ENCODE measurements at regions of chr6 and their contacts with region 1.

Region 1: GRCh38 chr6:125956506-125957390 is at the start of gene HINT3:
- DNase-seq: peak; percentile 99
- ATAC-seq: peak; percentile 96 to 98
- total RNA-seq, gene HINT3: 22.1 to 27.5 TPM

Region 2: DNA sequence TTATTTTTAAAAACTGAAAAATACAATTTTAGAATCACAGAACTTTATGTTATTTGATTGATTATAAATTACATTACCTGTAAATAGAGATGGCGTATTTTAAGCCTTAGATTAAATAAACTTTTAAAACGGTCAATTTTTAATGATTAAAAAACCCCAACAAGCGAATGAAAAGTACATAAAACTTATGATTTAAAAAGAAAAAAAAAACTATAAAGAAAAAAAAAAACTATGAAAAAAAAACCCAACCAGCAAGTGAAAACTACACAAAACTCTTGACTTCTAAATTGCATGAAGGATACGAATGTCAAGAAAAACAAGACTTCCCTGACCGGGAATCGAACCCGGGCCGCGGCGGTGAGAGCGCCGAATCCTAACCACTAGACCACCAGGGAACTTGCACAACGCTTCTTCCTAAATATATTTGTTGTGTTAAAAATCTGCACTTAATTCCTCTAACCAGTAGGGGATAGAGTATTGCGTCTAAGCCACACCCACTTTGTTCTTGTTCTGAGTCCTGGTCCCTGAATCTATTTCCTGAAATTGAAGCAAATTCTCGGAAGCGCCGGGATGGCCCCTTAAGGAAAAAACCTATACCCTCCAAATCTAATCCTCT is 176.7 kb before region 1 on chr6:
- intact Hi-C with region 1: loop called (anchors 2 to 10 kb)
- DNase-seq: peak; percentile 73
- ATAC-seq: peak; percentile 97 to 98

Measured in left cardiac atrium (tissue), 4 donors.